ENCODE measurements at regions of chr1 and their contacts with region 1.

Region 1: GRCh38 chr1:37323486-37324377 is 150.6 kb upstream of the ZC3H12A start:
- DNase-seq: no peak
- H3K4me3 Mint-ChIP-seq: no peak overlapping the region
- H3K27ac Mint-ChIP-seq: no peak overlapping the region
- H3K4me1 Mint-ChIP-seq: no peaks in the 10 kb centered on the region
- H3K27me3 Mint-ChIP-seq: peaks cover 17% of the 10 kb centered on the region

Region 2: GRCh38 chr1:36516372-36517325 is 807.1 kb before region 1 on chr1:
- intact Hi-C with region 1: loop called (anchors 5 kb)
- DNase-seq: peak; percentile 15
- H3K4me3 Mint-ChIP-seq: no peak overlapping the region
- H3K27ac Mint-ChIP-seq: no peak overlapping the region
- H3K4me1 Mint-ChIP-seq: no peaks in the 10 kb centered on the region
- H3K27me3 Mint-ChIP-seq: peaks cover 3% of the 10 kb centered on the region

Region 3: DNA sequence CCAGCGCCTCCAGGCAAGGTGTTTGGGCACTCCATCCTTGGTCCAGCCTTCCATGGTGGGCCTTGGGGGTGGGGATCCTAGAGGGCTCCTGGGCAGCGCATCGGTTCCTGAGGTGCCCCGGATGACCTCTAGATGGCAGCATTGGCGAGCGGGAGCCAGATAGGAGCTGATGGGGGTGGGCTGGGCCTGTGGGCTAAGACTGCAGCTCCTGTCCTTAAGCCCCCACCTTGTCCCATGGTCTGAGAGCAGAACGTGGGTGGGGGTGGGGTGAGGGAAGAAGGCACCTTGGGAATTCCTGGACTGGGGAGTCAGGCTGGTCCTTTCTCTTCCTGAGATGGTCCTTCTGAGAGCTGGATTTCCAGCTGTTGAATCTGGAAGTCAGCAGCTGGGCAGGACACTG is 747.6 kb before region 1 on chr1:
- intact Hi-C with region 1: loop called (anchors 10 kb)
- DNase-seq: peak; percentile 11
- H3K4me3 Mint-ChIP-seq: no peak overlapping the region
- H3K27ac Mint-ChIP-seq: no peak overlapping the region
- H3K4me1 Mint-ChIP-seq: no peaks in the 10 kb centered on the region
- H3K27me3 Mint-ChIP-seq: peaks cover 9% of the 10 kb centered on the region

Region 4: GRCh38 chr1:36703526-36704208 is 620.1 kb before region 1 on chr1:
- intact Hi-C with region 1: loop called (anchors 5 kb)
- DNase-seq: peak; percentile 44
- H3K4me3 Mint-ChIP-seq: no peak overlapping the region
- H3K27ac Mint-ChIP-seq: no peak overlapping the region
- H3K4me1 Mint-ChIP-seq: peaks cover 5% of the 10 kb centered on the region
- H3K27me3 Mint-ChIP-seq: peaks cover 20% of the 10 kb centered on the region

Region 5: DNA sequence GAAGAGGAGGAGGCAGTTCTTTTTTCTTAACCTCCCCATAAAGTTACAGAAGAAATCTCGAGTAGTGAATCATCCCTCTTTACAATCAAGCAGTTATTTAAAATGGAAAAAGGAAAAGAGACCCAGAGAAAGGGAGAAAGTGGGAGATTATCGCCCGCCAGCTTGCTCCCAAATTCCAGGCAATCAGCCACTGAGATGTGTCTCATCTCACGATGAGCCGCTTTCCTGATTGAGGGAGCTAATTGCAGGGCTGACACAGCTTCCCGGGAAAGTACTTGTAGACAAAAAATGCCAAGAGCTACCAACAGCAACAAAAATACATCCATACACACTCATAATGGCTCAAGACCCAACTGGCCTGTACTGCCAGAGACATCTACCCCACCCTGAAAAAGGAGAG is 41.0 kb before region 1 on chr1:
- intact Hi-C with region 1: no loop called
- DNase-seq: no peak
- H3K4me3 Mint-ChIP-seq: no peak overlapping the region
- H3K27ac Mint-ChIP-seq: no peak overlapping the region
- H3K4me1 Mint-ChIP-seq: no peaks in the 10 kb centered on the region
- H3K27me3 Mint-ChIP-seq: peaks cover 2% of the 10 kb centered on the region

Region 6: DNA sequence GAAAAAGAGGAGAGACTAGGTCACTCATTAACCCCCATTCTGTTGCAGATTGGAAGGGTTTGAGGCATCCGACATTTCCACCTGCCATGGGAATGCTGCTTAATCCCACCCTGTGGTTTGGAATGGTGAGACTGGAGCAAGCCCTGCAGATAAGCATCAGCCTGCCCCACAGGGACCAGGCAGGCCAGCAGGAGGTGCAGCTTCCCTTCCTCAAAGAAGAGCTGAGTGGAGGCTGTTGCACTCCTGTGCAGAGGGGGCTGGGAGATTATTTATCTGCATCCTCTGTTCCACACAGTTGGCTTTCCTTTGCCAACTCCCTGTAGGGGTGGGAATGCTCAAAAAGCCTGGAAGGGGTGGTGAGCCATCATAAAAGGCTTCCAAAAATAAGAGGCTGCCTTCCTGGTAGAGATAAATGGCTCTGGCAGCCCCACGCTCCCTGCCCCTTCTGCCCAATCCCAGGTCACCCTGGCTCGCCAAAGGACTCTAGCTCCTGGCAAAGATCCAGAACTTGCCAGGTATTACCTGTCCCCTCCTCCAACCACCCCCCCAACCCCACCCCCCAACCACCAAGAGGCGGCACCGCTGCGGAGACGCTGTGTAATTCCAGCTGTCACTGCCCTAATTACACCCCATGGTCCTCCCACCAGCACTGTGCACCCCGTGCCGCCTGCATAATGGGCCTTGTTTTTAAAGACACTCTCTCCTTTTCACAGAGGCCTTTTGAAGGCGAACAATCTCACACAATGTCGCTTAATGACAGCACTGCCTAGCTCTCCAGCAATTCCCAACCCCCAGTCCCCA is 67.7 kb after region 1 on chr1:
- intact Hi-C with region 1: no loop called
- DNase-seq: no peak
- H3K4me3 Mint-ChIP-seq: no peak overlapping the region
- H3K27ac Mint-ChIP-seq: no peak overlapping the region
- H3K4me1 Mint-ChIP-seq: no peaks in the 10 kb centered on the region
- H3K27me3 Mint-ChIP-seq: peaks cover 18% of the 10 kb centered on the region